Transverse colon (tissue), 4 donors: ENCODE measurements at regions of chr18 and their contacts with region 1.

Region 1: DNA sequence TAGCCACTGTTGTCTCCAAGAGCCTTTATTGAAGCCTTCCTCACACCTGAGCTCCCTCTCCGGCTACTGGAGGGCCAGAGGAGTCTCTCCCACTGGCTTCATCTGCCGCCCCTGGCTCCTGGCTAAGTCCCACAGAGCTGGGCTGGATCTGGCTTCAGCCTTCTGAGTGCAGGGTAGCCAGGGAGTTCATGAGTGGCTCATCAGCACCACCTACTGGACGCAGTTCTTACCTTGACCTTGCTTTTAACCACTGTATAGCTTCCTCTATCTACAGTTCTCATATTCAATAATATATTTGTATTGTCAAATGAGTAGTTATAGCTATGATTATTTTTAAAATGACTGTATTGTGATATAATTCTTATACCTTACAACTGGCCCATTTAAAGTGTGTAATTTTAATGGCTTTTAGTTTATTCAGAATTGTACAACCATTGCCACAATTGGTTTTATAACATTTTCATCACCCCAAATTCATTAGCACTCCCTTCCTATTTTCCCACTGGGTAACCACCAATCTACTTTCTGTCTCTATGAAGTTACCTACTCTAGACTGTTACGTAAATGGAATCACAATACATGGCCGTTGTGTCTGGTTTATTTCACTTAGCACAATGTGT is 17.7 kb downstream of the CNDP1 start:
- DNase-seq: peak; percentile 90
- H3K4me3 ChIP-seq: no peak overlapping the region
- H3K27ac ChIP-seq: no peak overlapping the region
- H3K4me1 ChIP-seq: peaks cover 0 to 6% (median 2%) of the 10 kb centered on the region in 4 donors
- H3K27me3 ChIP-seq: no peaks in the 10 kb centered on the region
- CTCF ChIP-seq: peak; percentile 80 to 85 (median 84)
- EP300 ChIP-seq: no peak
- POLR2A ChIP-seq: no peak

Region 2: GRCh38 chr18:74196220-74197119 is 355.6 kb before region 1 on chr18:
- in situ Hi-C with region 1: loop called (anchors 5 to 25 kb)
- intact Hi-C with region 1: loop called (anchors 10 kb)
- DNase-seq: peak; percentile 39
- H3K4me3 ChIP-seq: peak overlapping the region in 3 of 4 donors; percentile 11 to 41 (median 19)
- H3K27ac ChIP-seq: peak overlapping the region in 2 of 4 donors; percentile 30 to 32
- H3K4me1 ChIP-seq: peaks cover 0 to 24% (median 10%) of the 10 kb centered on the region in 4 donors
- H3K27me3 ChIP-seq: no peaks in the 10 kb centered on the region
- CTCF ChIP-seq: peak; percentile 89 to 97 (median 95)
- EP300 ChIP-seq: no peak
- POLR2A ChIP-seq: no peak

Region 3: DNA sequence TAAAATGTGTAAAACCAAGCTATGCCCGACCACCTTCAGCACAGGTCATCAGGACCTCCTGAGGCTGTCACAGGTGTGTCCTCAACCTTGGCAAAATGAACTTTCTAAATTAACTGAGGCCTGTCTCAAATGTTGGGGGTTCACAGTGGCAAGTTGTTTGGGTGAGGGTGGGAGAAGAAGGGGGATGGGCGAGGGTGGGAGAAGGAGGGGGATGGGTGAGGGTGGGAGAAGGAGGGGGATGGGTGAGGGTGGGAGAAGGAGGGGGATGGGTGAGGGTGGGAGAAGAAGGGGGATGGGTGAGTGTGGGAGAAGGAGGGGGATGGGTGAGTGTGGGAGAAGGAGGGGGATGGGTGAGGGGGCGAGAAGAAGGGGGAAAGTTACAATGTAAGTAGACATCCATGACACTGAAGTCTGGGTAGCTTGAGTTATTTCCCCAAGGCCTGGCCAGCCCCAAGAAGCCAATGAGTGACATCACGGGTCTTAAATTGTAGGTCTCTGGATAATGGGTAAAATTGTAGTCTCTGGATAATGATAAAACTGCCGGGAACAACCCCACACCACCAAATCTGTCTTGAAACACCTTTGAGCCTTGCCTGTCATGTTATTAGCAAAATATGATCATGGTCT is 347.4 kb before region 1 on chr18:
- in situ Hi-C with region 1: loop called (anchors 5 to 25 kb)
- intact Hi-C with region 1: loop called (anchors 10 kb)
- DNase-seq: no peak
- H3K4me3 ChIP-seq: no peak overlapping the region
- H3K27ac ChIP-seq: no peak overlapping the region
- H3K4me1 ChIP-seq: peaks cover 0 to 7% (median 5%) of the 10 kb centered on the region in 4 donors
- H3K27me3 ChIP-seq: no peaks in the 10 kb centered on the region
- CTCF ChIP-seq: no peak
- EP300 ChIP-seq: no peak
- POLR2A ChIP-seq: no peak

Region 4: DNA sequence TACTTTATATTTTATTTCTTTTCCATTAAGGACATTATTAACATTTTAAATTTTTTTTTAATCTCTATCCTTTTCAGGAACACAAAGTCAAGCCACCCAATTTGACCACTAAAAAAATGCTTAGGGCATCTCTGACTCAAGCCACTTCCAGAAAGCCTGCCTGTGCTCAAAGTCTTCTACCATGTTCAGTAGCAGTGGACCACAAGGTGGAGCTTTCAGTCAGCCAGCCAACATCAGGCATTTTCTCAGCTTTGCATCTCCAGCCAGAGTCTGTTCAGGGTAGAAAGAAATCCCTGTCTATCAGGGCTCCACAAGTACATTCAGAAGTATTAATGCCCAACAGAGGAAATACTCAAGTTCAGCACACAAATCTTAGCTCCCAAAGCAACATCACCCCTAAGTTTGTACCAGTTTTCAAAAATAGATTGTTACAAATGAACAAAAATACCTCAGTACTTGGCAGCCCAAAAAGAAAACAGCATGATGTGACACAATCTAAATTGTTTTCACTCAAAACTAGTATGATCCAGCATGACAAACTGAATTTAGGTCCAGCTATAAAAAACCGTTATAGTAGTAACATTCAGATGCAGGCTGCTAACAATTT is 198.8 kb before region 1 on chr18:
- in situ Hi-C with region 1: loop called (anchors 5 to 25 kb)
- intact Hi-C with region 1: loop called (anchors 5 kb)
- DNase-seq: peak; percentile 62
- H3K4me3 ChIP-seq: no peak overlapping the region
- H3K27ac ChIP-seq: no peak overlapping the region
- H3K4me1 ChIP-seq: peaks cover 0 to 20% (median 0%) of the 10 kb centered on the region in 4 donors
- H3K27me3 ChIP-seq: no peaks in the 10 kb centered on the region
- CTCF ChIP-seq: peak; percentile 64 to 86 (median 67)
- EP300 ChIP-seq: no peak
- POLR2A ChIP-seq: no peak

Region 5: GRCh38 chr18:74459889-74460288 is 92.2 kb before region 1 on chr18:
- in situ Hi-C with region 1: loop called in 1 of 4 experiments (anchors 25 kb)
- intact Hi-C with region 1: no loop called
- DNase-seq: no peak
- H3K4me3 ChIP-seq: no peak overlapping the region
- H3K27ac ChIP-seq: no peak overlapping the region
- H3K4me1 ChIP-seq: peaks cover 4 to 15% (median 10%) of the 10 kb centered on the region in 4 donors
- H3K27me3 ChIP-seq: peaks cover 48% of the 10 kb centered on the region
- CTCF ChIP-seq: no peak
- EP300 ChIP-seq: no peak
- POLR2A ChIP-seq: no peak

Region 6: DNA sequence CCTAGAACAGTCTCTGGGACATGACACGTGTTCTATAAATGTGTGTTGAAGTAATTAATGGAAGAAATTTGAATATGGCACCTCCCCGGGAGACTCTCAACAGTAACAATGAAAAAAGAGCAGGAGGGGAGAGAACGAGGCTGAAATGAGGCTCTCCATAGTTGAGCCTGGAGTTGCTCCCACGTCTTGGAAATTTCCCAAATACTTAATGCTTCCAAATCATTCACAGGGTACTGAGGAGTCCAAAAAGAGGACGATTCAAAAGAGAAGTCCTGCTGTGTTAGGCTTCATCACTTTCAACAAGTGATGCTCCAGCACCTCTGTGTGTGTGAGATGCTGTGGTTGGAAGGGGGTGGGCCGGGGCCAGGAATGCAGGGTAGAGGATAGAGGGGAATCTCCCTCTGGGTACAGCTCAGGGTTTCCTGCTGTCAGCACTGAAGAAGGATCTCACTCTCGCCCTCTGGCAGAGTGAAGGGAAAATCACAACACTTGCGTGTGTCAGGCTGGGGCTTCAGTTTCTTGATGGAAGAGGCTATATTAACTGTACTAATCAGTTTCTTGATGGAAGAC is 27.5 kb after region 1 on chr18:
- in situ Hi-C with region 1: no loop called
- intact Hi-C with region 1: no loop called
- DNase-seq: no peak
- H3K4me3 ChIP-seq: no peak overlapping the region
- H3K27ac ChIP-seq: no peak overlapping the region
- H3K4me1 ChIP-seq: peaks cover 0 to 2% (median 0%) of the 10 kb centered on the region in 4 donors
- H3K27me3 ChIP-seq: peaks cover 4% of the 10 kb centered on the region
- CTCF ChIP-seq: no peak
- EP300 ChIP-seq: no peak
- POLR2A ChIP-seq: no peak